Activated CD4-positive, alpha-beta T cell treated with anti-CD3 and anti-CD28 coated beads, Interleukin-2, amount 10 ng/mL, durations not matched to agents 24 days and 14 days (primary cell): ENCODE measurements at regions of chr19 and their contacts with region 1.

Region 1: DNA sequence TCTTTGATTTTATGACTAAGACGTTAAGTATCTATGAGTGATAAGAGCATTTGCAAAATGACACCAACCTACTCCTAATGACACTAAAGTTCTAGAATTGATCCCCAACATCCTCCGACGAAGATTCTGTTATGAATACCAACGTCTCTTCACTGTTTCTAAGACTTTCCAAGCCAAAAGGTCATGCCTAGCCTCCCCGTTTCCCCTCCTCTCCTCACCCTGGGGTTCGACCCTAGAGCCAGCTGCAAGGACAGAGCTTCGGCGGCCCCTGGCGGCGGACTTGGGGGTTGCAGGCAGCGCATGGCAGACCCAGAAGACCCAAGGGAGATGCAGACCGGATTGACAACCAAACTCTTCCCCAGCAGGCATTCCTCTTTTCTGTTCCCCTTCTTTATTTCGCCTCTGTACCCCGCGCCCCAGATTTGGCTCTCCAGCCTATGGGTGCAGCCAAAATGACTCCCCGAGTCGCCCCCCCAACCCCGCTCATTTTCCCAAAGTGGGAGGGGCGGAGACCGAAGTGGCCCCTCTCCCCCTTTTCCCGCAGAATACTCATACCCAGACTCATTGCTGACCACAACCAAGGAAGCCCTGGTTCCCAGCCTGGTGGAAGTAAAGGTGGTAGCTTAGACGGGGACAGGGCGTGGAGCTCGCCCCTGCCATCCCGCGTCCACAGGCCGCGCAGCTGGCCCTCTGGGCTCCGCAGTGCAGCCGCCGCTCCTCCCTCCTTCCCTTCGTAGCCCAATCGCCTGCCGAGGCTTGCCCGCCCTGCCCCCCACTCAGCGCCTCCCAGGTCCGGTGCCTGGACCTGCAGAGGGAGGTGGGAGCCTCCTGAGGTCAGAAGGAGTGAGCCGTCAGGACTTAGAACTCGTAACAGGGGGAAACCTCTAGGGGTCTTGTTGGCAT is 4.1 kb upstream of the EML2 start:
- DNase-seq: peak; percentile 97
- H3K4me3 Mint-ChIP-seq: peak overlapping the region; percentile 82
- H3K27ac Mint-ChIP-seq: peak overlapping the region; percentile 98
- H3K4me1 Mint-ChIP-seq: peaks cover 42% of the 10 kb centered on the region
- H3K27me3 Mint-ChIP-seq: peaks cover 6% of the 10 kb centered on the region

Region 2: GRCh38 chr19:45283443-45284033 is 359.7 kb before region 1 on chr19:
- intact Hi-C with region 1: no loop called
- DNase-seq: no peak
- H3K4me3 Mint-ChIP-seq: no peak overlapping the region
- H3K27ac Mint-ChIP-seq: no peak overlapping the region
- H3K4me1 Mint-ChIP-seq: peaks cover 2% of the 10 kb centered on the region
- H3K27me3 Mint-ChIP-seq: no peaks in the 10 kb centered on the region

Region 3: DNA sequence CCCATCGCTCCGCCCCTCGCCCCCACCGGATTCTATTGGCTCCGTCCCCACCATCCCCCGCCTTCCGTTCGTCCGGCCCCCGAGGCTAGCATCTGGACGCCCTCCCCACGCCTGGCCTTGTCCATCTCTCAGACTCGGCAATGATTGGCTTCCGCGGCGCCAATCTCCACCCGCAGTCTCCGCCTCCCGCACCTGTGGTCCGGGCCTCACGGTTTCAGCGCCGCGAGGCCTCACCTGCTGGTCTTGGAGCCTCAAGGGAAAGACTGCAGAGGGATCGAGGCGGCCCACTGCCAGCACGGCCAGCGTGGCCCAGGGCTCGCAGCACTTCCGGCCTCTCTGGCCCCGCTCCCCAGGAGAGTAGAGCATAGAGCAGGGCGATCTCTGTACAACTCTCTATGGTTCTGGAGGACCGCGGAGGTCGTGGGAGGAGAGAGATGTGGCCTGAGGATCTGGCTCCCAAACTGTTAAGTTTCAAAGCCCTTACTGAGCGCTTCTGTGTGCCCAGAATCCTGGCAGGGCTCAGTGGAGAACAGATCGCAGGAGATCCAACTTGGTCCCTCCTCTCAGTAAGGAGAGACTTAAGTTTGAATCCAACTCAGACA is 219.6 kb before region 1 on chr19 and contains the start of gene ERCC1:
- intact Hi-C with region 1: loop called (anchors 5 kb)
- DNase-seq: peak; percentile 96
- H3K4me3 Mint-ChIP-seq: peak within 1 kb of the TSS; percentile 100
- H3K27ac Mint-ChIP-seq: peak within 1 kb of the TSS; percentile 98
- H3K4me1 Mint-ChIP-seq: peaks cover 55% of the 10 kb centered on the region
- H3K27me3 Mint-ChIP-seq: peaks cover 7% of the 10 kb centered on the region
- total RNA-seq, gene ERCC1: 123 and 124 TPM in 2 replicates

Region 4: GRCh38 chr19:45506246-45506990 is 136.9 kb before region 1 on chr19:
- intact Hi-C with region 1: loop called (anchors 1 kb)
- DNase-seq: peak; percentile 99
- H3K4me3 Mint-ChIP-seq: peak overlapping the region; percentile 92
- H3K27ac Mint-ChIP-seq: peak overlapping the region; percentile 97
- H3K4me1 Mint-ChIP-seq: peaks cover 37% of the 10 kb centered on the region
- H3K27me3 Mint-ChIP-seq: no peaks in the 10 kb centered on the region

Region 5: GRCh38 chr19:45584332-45585157 is 58.7 kb before region 1 on chr19 and contains the start of gene OPA3:
- intact Hi-C with region 1: loop called (anchors 1 kb)
- DNase-seq: peak; percentile 100
- H3K4me3 Mint-ChIP-seq: peak within 1 kb of the TSS; percentile 98
- H3K27ac Mint-ChIP-seq: peak within 1 kb of the TSS; percentile 99
- H3K4me1 Mint-ChIP-seq: peaks cover 13% of the 10 kb centered on the region
- H3K27me3 Mint-ChIP-seq: peaks cover 1% of the 10 kb centered on the region
- total RNA-seq, gene OPA3: 14.0 and 15.3 TPM in 2 replicates

Region 6: DNA sequence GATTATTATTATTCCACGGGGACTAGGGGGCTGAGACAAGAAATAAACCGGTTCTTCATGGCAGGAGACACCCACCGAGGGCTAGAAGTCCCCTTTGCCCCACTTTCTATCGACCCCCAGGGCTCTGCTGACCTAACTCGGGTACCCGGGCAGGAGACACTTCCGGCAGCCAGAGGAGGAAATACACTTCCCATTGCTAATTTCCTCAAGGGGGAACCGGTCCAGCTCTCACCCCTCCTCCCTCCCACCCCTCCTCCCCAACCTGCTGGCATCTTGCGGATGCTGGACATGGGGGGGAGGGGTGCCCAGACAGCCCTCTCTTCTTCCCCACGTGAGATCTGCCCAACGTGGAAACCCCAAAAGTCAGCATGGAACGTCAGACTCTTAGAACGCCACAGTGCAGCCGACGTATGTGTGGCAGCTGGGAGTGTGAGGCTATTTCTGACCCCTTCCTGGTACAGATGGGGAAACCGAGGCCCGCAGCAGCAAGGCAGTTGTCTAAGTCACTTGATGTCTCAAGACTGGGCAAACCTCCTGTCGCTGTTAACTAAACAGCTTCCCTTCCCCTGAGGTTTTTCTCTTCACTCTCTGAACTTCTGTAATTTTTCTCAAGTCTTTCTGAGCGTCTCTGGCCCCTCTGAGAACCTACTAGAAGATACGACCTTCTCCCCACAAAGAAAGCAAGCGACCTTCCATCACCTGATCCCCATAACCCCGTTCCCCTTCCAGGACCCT is 44.8 kb before region 1 on chr19:
- intact Hi-C with region 1: no loop called
- DNase-seq: no peak
- H3K4me3 Mint-ChIP-seq: peak overlapping the region; percentile 53
- H3K27ac Mint-ChIP-seq: no peak overlapping the region
- H3K4me1 Mint-ChIP-seq: peaks cover 28% of the 10 kb centered on the region
- H3K27me3 Mint-ChIP-seq: peaks cover 76% of the 10 kb centered on the region

Region 7: GRCh38 chr19:45613926-45614725 is 29.1 kb before region 1 on chr19:
- intact Hi-C with region 1: loop called (anchors 1 kb)
- DNase-seq: peak; percentile 77
- H3K4me3 Mint-ChIP-seq: peak overlapping the region; percentile 60
- H3K27ac Mint-ChIP-seq: peak overlapping the region; percentile 94
- H3K4me1 Mint-ChIP-seq: peaks cover 16% of the 10 kb centered on the region
- H3K27me3 Mint-ChIP-seq: no peaks in the 10 kb centered on the region

Region 8: DNA sequence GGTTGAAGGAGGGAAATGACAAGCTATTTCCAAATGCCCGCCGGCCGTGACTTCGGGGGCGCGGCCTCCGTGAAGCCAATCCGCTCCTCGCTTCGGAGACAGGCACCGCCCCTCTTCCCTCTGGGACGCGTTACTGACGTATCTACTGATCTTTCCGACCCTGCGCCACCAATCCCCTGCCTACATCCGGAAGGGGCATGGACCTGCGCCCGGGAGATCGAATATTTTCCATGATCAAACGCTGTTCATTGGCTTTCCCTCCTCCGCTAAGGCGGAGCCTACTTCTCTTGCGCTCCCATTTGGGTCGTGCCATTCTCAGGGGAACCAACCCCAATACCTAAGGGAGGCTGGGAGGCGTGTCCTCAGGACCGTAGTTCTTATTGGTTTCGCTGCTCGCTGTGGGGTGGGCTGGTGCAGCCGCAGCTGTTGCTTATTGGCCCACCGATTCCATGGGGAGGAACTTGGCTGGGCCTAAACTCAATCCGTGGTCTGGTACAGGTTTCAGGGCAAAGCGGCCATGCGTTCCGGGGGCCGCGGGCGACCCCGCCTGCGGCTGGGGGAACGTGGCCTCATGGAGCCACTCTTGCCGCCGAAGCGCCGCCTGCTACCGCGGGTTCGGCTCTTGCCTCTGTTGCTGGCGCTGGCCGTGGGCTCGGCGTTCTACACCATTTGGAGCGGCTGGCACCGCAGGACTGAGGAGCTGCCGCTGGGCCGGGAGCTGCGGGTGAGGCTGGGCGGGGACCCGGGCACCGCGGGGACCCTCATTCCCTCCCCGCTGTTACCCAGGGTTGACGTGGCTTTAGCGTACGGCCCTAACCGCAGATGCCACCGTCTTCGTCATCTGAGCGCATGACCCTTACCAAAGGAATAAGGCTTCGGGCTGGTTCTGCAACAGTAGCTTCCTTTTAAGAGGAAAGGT is 49.2 kb after region 1 on chr19 and contains the start of gene QPCTL:
- intact Hi-C with region 1: loop called (anchors 1 kb)
- DNase-seq: peak; percentile 99
- H3K4me3 Mint-ChIP-seq: peak within 1 kb of the TSS; percentile 94
- H3K27ac Mint-ChIP-seq: peak within 1 kb of the TSS; percentile 97
- H3K4me1 Mint-ChIP-seq: peaks cover 19% of the 10 kb centered on the region
- H3K27me3 Mint-ChIP-seq: no peaks in the 10 kb centered on the region
- total RNA-seq, gene QPCTL: 16.7 and 20.9 TPM in 2 replicates

Region 9: GRCh38 chr19:45886427-45887199 is 243.3 kb after region 1 on chr19:
- intact Hi-C with region 1: loop called (anchors 1 kb)
- DNase-seq: peak; percentile 96
- H3K4me3 Mint-ChIP-seq: peak overlapping the region; percentile 89
- H3K27ac Mint-ChIP-seq: peak overlapping the region; percentile 93
- H3K4me1 Mint-ChIP-seq: peaks cover 18% of the 10 kb centered on the region
- H3K27me3 Mint-ChIP-seq: no peaks in the 10 kb centered on the region